ENCODE measurements at regions of chr11 and their contacts with region 1.

Region 1: DNA sequence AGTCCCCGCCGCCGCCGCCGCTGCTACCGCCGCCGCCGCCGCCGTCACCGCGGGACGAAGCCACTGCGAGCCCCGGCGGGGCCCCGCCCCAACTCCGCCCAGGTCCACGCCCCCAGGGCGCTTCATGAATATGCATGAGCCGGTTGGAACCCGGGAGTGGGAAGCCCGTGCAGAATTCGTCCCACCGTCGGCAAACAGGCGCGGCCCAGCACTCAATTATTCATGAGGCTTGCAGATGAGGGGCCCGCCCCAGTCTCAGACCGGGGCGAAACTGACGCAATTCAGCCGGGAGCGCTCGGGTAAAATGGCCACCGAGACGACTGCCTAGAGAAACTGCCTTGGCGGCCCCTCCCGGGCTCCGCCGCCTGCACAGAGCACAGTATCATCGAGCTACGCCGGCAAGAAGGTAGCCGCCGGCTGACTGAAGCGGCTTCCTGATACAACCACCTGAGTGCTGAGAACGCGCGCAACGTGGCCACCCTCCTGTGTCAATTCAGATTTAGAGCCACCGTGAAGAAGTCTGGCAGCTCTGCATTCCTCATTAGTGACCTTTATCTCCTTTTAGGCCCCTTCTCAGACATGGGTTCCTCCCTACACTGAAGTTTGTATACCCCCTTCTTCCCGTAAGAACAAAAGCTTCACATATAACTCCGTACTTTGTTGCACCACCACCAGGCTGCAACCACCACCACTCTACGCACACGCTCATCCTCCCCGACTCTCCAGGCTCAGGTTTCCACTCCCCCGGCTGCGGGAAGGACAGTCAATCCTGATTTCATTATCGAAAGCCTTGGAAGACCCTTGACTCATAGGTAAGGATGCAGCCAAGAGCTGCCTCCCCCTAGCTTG is at the start of gene TNKS1BP1:
- DNase-seq: peak; percentile 98 to 99
- ATAC-seq: peak; percentile 89
- H3K4me3 ChIP-seq: peak within 1 kb of the TSS; percentile 56 to 78
- H3K27ac ChIP-seq: peak within 1 kb of the TSS; percentile 87 to 97
- H3K4me1 ChIP-seq: no peaks in the 10 kb centered on the region
- H3K27me3 ChIP-seq: no peaks in the 10 kb centered on the region
- total RNA-seq, gene TNKS1BP1: 169 to 184 TPM

Region 2: GRCh38 chr11:57426929-57427726 is 102.0 kb after region 1 on chr11 and contains the start of gene SLC43A3:
- intact Hi-C with region 1: loop called in 1 of 2 experiments (anchors 5 kb)
- DNase-seq: peak; percentile 89 to 91
- ATAC-seq: peak; percentile 84
- H3K4me3 ChIP-seq: peak within 1 kb of the TSS; percentile 13 to 58
- H3K27ac ChIP-seq: peak within 1 kb of the TSS; percentile 93 to 96
- H3K4me1 ChIP-seq: peaks cover 0 to 14% of the 10 kb centered on the region in 2 donors
- H3K27me3 ChIP-seq: no peaks in the 10 kb centered on the region
- total RNA-seq, gene SLC43A3: 59.7 to 97.8 TPM

Region 3: GRCh38 chr11:57657194-57658022 is 332.3 kb after region 1 on chr11 and contains the start of gene CLP1:
- intact Hi-C with region 1: loop called (anchors 10 kb)
- DNase-seq: peak; percentile 100
- ATAC-seq: peak; percentile 99
- H3K4me3 ChIP-seq: peak within 1 kb of the TSS; percentile 46 to 76
- H3K27ac ChIP-seq: peak within 1 kb of the TSS in 1 of 2 donors; percentile 81
- H3K4me1 ChIP-seq: no peaks in the 10 kb centered on the region
- H3K27me3 ChIP-seq: no peaks in the 10 kb centered on the region
- total RNA-seq, gene CLP1: 10.0 to 10.6 TPM

Region 4: GRCh38 chr11:57667736-57668435 is 342.8 kb after region 1 on chr11 and contains the start of gene ZDHHC5:
- intact Hi-C with region 1: loop called in 1 of 2 experiments (anchors 10 kb)
- DNase-seq: peak; percentile 100
- ATAC-seq: peak; percentile 98
- H3K4me3 ChIP-seq: peak within 1 kb of the TSS; percentile 52 to 76
- H3K27ac ChIP-seq: peak within 1 kb of the TSS; percentile 43 to 76
- H3K4me1 ChIP-seq: no peaks in the 10 kb centered on the region
- H3K27me3 ChIP-seq: no peaks in the 10 kb centered on the region
- total RNA-seq, gene ZDHHC5: 47.9 to 51.0 TPM

Region 5: DNA sequence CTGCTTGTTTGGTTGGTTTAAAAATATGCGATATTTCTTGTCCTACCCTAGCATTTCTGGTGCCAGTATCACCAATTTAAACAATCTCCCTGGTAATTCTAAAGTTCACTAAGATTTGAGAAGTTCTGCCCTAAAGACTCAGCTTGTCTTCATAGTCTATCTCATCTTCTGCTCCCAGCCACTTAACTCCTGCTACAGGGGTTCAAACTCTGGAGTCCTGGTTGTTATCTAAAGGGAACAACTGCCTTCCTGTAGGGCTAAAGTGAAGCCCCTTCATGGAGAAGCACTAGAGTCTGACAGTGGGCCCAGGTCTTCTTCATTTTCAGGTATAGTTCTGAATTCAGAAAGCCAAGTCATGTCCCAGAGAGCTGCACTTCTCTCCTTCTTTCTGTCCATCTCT is 509.7 kb after region 1 on chr11:
- intact Hi-C with region 1: no loop called
- DNase-seq: no peak
- ATAC-seq: no peak
- H3K4me3 ChIP-seq: no peak overlapping the region
- H3K27ac ChIP-seq: no peak overlapping the region
- H3K4me1 ChIP-seq: no peaks in the 10 kb centered on the region
- H3K27me3 ChIP-seq: peaks cover 0 to 4% of the 10 kb centered on the region in 2 donors

Measured in aorta (tissue), 5 donors.